IMR-90 (cell line): ENCODE measurements at regions of chrX and their contacts with region 1.

Region 1: GRCh38 chrX:51614353-51615012 is 4.2 kb downstream of the CENPVL3 start:
- DNase-seq: peak; percentile 59
- ATAC-seq: peak; percentile 73
- H3K4me3 ChIP-seq: no peak overlapping the region
- H3K27ac ChIP-seq: no peak overlapping the region
- H3K4me1 ChIP-seq: no peaks in the 10 kb centered on the region
- H3K27me3 ChIP-seq: peaks cover 21% of the 10 kb centered on the region
- CTCF ChIP-seq: peak; percentile 61
- POLR2A ChIP-seq: no peak
- RAD21 ChIP-seq: peak; percentile 72

Region 2: GRCh38 chrX:51496501-51497291 is 117.8 kb before region 1 on chrX and contains the start of gene NUDT11:
- CTCF ChIA-PET with region 1: no interaction called
- POLR2A ChIA-PET with region 1: no interaction called
- dilution Hi-C with region 1: no loop called
- in situ Hi-C with region 1: no loop called
- intact Hi-C with region 1: loop called (anchors 1 kb)
- DNase-seq: peak; percentile 72
- ATAC-seq: peak; percentile 97
- H3K4me3 ChIP-seq: peak within 1 kb of the TSS; percentile 79
- H3K27ac ChIP-seq: peak within 1 kb of the TSS; percentile 83
- H3K4me1 ChIP-seq: no peaks in the 10 kb centered on the region
- H3K27me3 ChIP-seq: peaks cover 3% of the 10 kb centered on the region; the same call in 1 of the 2 replicates
- CTCF ChIP-seq: no peak
- POLR2A ChIP-seq: no peak; the same call in 1 of the 2 replicates
- RAD21 ChIP-seq: no peak
- total RNA-seq, gene NUDT11: 13.8 and 19.2 TPM in 2 replicates

Region 3: DNA sequence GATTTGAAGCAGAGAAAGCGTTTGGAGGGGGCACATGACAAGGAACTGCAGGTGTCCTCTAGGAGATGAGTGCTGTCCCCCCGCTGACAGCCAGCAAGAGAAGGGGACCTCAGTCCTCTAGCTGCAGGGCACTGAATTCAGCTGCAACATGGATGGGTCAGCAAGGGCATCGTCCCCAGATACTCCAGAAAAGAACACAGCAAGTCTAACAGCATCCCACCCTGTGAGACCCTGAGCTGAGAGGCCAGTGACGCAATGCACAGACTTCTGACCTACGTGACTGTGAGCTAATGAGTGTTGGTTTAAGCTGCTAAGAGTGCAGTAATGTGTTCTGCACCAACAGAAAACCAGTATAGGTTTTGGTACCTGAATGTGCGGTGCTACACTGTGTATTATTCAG is 79.8 kb after region 1 on chrX:
- CTCF ChIA-PET with region 1: no interaction called
- POLR2A ChIA-PET with region 1: no interaction called
- dilution Hi-C with region 1: no loop called
- in situ Hi-C with region 1: no loop called
- intact Hi-C with region 1: no loop called
- DNase-seq: no peak
- ATAC-seq: no peak
- H3K4me3 ChIP-seq: no peak overlapping the region
- H3K27ac ChIP-seq: no peak overlapping the region
- H3K4me1 ChIP-seq: no peaks in the 10 kb centered on the region
- H3K27me3 ChIP-seq: peaks cover 4% of the 10 kb centered on the region; the same call in 1 of the 2 replicates
- CTCF ChIP-seq: no peak
- POLR2A ChIP-seq: no peak
- RAD21 ChIP-seq: no peak

Region 4: DNA sequence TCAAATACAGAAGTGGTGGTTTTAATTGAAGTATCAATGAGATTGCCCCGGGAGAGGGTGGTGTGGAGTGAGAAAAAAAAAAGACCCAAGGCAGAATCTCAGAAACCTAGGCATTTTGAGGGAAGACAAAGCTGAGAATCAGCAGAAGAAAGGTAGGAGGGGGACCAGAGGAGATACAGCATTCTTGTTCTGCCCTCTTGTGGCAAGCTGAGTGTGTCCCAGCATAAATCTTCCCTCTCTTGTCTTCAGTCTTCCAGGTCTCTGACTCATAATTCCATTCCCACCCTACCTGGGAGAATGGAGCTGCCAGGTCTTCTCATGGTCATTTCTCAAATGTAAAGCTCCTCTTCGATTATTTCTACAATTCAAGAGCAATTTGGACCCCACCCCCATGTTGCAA is 246.2 kb after region 1 on chrX:
- CTCF ChIA-PET with region 1: no interaction called
- POLR2A ChIA-PET with region 1: no interaction called
- dilution Hi-C with region 1: no loop called
- in situ Hi-C with region 1: no loop called
- intact Hi-C with region 1: loop called (anchors 10 kb)
- DNase-seq: peak; percentile 32
- ATAC-seq: peak; percentile 37; the same call in 1 of the 2 replicates
- H3K4me3 ChIP-seq: no peak overlapping the region
- H3K27ac ChIP-seq: no peak overlapping the region
- H3K4me1 ChIP-seq: peaks cover under 1% of the 10 kb centered on the region; the same call in 1 of the 2 replicates
- H3K27me3 ChIP-seq: no peaks in the 10 kb centered on the region
- CTCF ChIP-seq: peak; percentile 46
- POLR2A ChIP-seq: no peak
- RAD21 ChIP-seq: peak; percentile 49

Region 5: GRCh38 chrX:51892921-51893745 is 278.6 kb after region 1 on chrX and contains the start of gene MAGED1:
- CTCF ChIA-PET with region 1: no interaction called
- POLR2A ChIA-PET with region 1: no interaction called
- dilution Hi-C with region 1: no loop called
- in situ Hi-C with region 1: no loop called
- intact Hi-C with region 1: loop called (anchors 10 kb)
- DNase-seq: peak; percentile 95
- ATAC-seq: peak; percentile 86
- H3K4me3 ChIP-seq: peak within 1 kb of the TSS; percentile 97
- H3K27ac ChIP-seq: peak within 1 kb of the TSS; percentile 85
- H3K4me1 ChIP-seq: peaks cover 17% of the 10 kb centered on the region
- H3K27me3 ChIP-seq: no peaks in the 10 kb centered on the region
- CTCF ChIP-seq: no peak
- POLR2A ChIP-seq: peak; percentile 97
- RAD21 ChIP-seq: no peak
- total RNA-seq, gene MAGED1: 415 and 484 TPM in 2 replicates

Region 6: GRCh38 chrX:52138830-52139544 is 524.5 kb after region 1 on chrX:
- CTCF ChIA-PET with region 1: no interaction called
- POLR2A ChIA-PET with region 1: no interaction called
- dilution Hi-C with region 1: no loop called
- in situ Hi-C with region 1: no loop called
- intact Hi-C with region 1: no loop called
- DNase-seq: no peak
- ATAC-seq: no peak
- H3K4me3 ChIP-seq: no peak overlapping the region
- H3K27ac ChIP-seq: no peak overlapping the region
- H3K4me1 ChIP-seq: no peaks in the 10 kb centered on the region
- H3K27me3 ChIP-seq: no peaks in the 10 kb centered on the region; the same call in 1 of the 2 replicates
- CTCF ChIP-seq: no peak
- POLR2A ChIP-seq: no peak
- RAD21 ChIP-seq: no peak

Region 7: DNA sequence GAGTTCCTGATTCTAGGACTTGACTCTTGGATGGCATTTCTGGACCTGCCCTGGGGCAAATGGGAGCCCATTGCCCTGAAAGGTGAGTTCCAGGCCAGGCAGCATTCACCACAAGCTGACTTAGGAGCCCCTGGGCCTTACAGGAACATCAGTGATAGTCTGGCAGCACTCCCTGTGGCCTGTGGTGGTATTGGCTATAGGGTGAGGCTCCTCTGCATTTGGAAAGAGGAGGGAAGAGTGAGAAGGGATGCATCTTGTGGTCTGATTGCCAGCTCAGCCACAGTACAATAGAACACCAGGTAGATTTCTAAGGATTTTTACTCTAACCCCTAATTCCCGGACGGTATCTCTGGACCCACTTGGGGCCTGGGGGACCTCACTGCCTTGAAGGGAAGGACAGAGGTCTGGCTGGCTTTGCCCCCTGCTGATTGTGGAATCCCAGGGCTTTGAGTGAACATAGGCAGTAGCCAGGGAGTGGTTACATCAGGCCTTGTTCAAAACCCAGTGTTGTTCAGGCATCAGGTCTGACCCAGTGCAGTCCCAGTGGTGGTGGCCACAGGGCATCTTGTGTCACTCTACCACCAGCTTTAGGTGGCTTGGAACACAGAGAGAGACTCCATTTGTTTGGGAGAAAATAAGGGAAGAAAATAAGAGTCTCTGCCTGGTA is 603.1 kb after region 1 on chrX:
- CTCF ChIA-PET with region 1: no interaction called
- POLR2A ChIA-PET with region 1: no interaction called
- dilution Hi-C with region 1: no loop called
- in situ Hi-C with region 1: no loop called
- intact Hi-C with region 1: no loop called
- DNase-seq: no peak
- ATAC-seq: no peak
- H3K4me3 ChIP-seq: no peak overlapping the region
- H3K27ac ChIP-seq: no peak overlapping the region
- H3K4me1 ChIP-seq: no peaks in the 10 kb centered on the region
- H3K27me3 ChIP-seq: peaks cover 2% of the 10 kb centered on the region; the same call in 1 of the 2 replicates
- CTCF ChIP-seq: no peak
- POLR2A ChIP-seq: no peak
- RAD21 ChIP-seq: no peak